Caco-2 (cell line): ENCODE measurements at regions of chr10 and their contacts with region 1.

Region 1: DNA sequence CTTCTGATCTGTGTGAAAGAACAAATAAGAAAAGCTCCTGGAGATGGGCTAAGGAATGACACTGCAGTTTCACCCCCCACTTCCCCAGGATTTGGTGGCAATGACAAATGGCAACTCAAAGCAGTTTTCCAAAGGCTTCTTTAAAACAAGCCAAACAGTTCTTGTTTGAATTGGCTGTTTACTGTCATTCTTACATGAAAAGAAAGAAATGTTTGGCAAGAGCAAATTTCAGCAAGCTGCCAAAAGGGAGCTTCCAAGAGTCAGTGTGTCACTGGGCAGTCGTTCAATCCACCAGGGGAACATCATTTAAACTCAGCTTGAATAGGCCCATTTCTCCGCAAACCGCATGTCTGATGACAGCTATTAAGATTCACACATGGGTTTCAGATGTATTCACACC is 119.0 kb upstream of the RHOBTB1 start:
- DNase-seq: peak; percentile 53 to 63
- H3K4me3 ChIP-seq: no peak overlapping the region
- H3K4me3 Mint-ChIP-seq: no peak overlapping the region
- H3K27ac Mint-ChIP-seq: no peak overlapping the region
- H3K4me1 ChIP-seq: peaks cover 47% of the 10 kb centered on the region
- H3K4me1 Mint-ChIP-seq: peaks cover 11% of the 10 kb centered on the region
- H3K27me3 ChIP-seq: no peaks in the 10 kb centered on the region
- H3K27me3 Mint-ChIP-seq: peaks cover 14% of the 10 kb centered on the region
- CTCF ChIP-seq: no peak

Region 2: DNA sequence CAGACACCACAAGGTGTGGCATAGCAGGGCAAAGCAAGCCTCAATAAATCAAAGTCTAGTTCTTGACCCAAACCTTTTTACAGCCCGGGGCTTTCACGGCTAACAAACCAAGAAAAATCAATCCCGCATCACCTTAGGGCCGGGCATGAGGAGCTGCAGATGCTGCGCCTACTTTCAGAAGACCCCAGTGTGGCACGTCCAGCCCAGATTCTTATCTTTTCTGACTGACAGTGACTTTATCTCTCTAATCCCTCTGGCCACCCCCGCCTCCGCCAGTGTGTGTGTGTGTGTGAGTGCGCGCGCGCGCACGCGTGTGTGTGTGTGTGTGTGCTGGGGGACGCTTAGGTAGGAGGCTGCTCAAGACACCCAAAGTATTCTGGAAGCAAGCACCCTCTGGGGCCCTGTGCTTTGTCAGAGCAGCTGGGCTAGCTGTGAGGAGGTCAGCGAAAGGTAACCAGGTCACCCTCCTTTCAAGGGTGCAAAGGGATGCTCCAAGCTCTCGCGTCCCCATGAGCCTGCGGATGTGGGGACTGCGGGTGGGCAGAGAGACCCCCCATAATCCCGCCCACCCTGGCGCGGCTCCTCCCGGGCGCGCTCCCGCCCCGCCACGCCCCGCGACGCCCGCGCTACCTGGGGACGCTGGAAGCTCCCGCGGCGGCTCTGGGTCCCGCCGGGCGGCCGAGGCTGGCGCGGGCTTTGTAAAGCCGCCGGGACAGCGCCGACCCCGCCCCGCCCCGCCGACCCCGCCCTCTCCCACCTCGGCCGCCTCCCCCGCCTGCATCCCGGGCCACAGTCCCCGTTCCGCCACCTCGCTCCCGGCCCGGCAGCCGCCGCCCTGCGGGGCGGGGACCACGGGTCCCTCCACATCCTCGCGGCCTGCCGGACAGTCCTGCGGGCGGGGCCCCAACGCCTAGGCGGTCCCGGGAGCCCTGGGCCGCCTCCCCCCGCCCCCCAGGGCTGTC is 62.0 kb before region 1 on chr10:
- CTCF ChIA-PET with region 1: no interaction called
- POLR2A ChIA-PET with region 1: no interaction called
- intact Hi-C with region 1: loop called (anchors 1 kb)
- DNase-seq: peak; percentile 77 to 81
- H3K4me3 ChIP-seq: peak overlapping the region; percentile 42
- H3K4me3 Mint-ChIP-seq: peak overlapping the region; percentile 83
- H3K27ac Mint-ChIP-seq: no peak overlapping the region
- H3K4me1 ChIP-seq: peaks cover 13% of the 10 kb centered on the region
- H3K4me1 Mint-ChIP-seq: peaks cover 5% of the 10 kb centered on the region
- H3K27me3 ChIP-seq: no peaks in the 10 kb centered on the region
- H3K27me3 Mint-ChIP-seq: peaks cover 4% of the 10 kb centered on the region
- CTCF ChIP-seq: no peak

Region 3: DNA sequence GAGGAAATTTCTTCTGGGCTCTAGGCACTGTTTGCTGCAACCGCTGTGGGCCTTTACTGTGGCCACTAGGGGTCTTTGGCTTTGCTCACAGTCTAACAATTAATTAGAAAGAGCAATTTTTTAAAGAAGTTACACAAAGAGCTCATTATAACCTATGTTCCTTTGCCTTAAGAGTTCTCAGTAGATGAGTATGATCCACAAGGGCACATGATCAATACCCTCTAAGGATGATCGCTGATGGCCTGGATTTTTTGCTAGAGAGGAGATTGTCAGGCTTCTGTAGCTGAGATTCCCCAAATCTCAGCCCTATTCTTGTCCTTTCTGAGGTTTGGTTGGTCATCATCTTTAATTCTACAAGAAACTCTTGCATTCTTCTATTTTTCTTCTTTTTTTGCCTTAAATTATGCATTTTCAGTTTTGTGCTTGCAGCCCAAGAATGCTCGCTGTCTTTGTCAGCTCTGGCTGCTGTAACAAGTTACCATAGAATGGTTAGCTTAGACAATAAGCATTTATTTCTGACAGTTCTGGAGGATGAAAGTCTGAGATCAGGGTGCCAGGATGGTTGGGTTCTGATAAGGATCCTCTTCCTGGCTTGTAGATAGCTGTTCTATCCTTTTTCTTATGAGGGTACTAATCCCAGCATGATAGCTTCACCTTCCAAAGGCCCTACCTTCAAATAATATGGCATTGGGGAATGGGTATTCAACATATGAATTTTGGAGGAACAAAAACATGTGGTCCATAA is 38.0 kb before region 1 on chr10:
- CTCF ChIA-PET with region 1: interaction called, 4 read pairs
- POLR2A ChIA-PET with region 1: no interaction called
- intact Hi-C with region 1: loop called (anchors 2 kb)
- DNase-seq: peak in 1 of 2 experiments; percentile 52
- H3K4me3 ChIP-seq: no peak overlapping the region
- H3K4me3 Mint-ChIP-seq: no peak overlapping the region
- H3K27ac Mint-ChIP-seq: no peak overlapping the region
- H3K4me1 ChIP-seq: no peaks in the 10 kb centered on the region
- H3K4me1 Mint-ChIP-seq: no peaks in the 10 kb centered on the region
- H3K27me3 ChIP-seq: no peaks in the 10 kb centered on the region
- H3K27me3 Mint-ChIP-seq: peaks cover 3% of the 10 kb centered on the region
- CTCF ChIP-seq: peak; percentile 91 to 97

Region 4: GRCh38 chr10:61081301-61081700 is 18.3 kb after region 1 on chr10:
- CTCF ChIA-PET with region 1: no interaction called
- POLR2A ChIA-PET with region 1: no interaction called
- intact Hi-C with region 1: no loop called
- DNase-seq: no peak
- H3K4me3 ChIP-seq: no peak overlapping the region
- H3K4me3 Mint-ChIP-seq: no peak overlapping the region
- H3K27ac Mint-ChIP-seq: no peak overlapping the region
- H3K4me1 ChIP-seq: no peaks in the 10 kb centered on the region
- H3K4me1 Mint-ChIP-seq: no peaks in the 10 kb centered on the region
- H3K27me3 ChIP-seq: no peaks in the 10 kb centered on the region
- H3K27me3 Mint-ChIP-seq: peaks cover 6% of the 10 kb centered on the region
- CTCF ChIP-seq: no peak

Region 5: GRCh38 chr10:61110936-61111335 is 47.9 kb after region 1 on chr10:
- CTCF ChIA-PET with region 1: no interaction called
- POLR2A ChIA-PET with region 1: no interaction called
- intact Hi-C with region 1: loop called (anchors 1 kb)
- DNase-seq: no peak
- H3K4me3 ChIP-seq: no peak overlapping the region
- H3K4me3 Mint-ChIP-seq: no peak overlapping the region
- H3K27ac Mint-ChIP-seq: no peak overlapping the region
- H3K4me1 ChIP-seq: peaks cover 6% of the 10 kb centered on the region; the same call in 1 of the 2 replicates
- H3K4me1 Mint-ChIP-seq: no peaks in the 10 kb centered on the region
- H3K27me3 ChIP-seq: no peaks in the 10 kb centered on the region
- H3K27me3 Mint-ChIP-seq: peaks cover 6% of the 10 kb centered on the region
- CTCF ChIP-seq: no peak

Region 6: GRCh38 chr10:61847087-61847486 is 784.1 kb after region 1 on chr10:
- CTCF ChIA-PET with region 1: no interaction called
- POLR2A ChIA-PET with region 1: no interaction called
- intact Hi-C with region 1: loop called (anchors 5 kb)
- DNase-seq: no peak
- H3K4me3 ChIP-seq: no peak overlapping the region
- H3K4me3 Mint-ChIP-seq: no peak overlapping the region
- H3K27ac Mint-ChIP-seq: peak overlapping the region; percentile 39
- H3K4me1 ChIP-seq: peaks cover 69% of the 10 kb centered on the region
- H3K4me1 Mint-ChIP-seq: peaks cover 54% of the 10 kb centered on the region
- H3K27me3 ChIP-seq: no peaks in the 10 kb centered on the region
- H3K27me3 Mint-ChIP-seq: no peaks in the 10 kb centered on the region
- CTCF ChIP-seq: no peak